Activated CD8-positive, alpha-beta T cell treated with anti-CD3 and anti-CD28 coated beads for 36 hours (primary cell): ENCODE measurements at regions of chrX and their contacts with region 1.

Region 1: GRCh38 chrX:137051978-137052642 is 18.3 kb upstream of the GPR101 start:
- DNase-seq: peak; percentile 83
- ATAC-seq: peak; percentile 95
- H3K4me3 Mint-ChIP-seq: peak overlapping the region; percentile 70
- H3K27ac Mint-ChIP-seq: peak overlapping the region; percentile 69
- H3K4me1 Mint-ChIP-seq: peaks cover 16% of the 10 kb centered on the region
- H3K27me3 Mint-ChIP-seq: peaks cover 18% of the 10 kb centered on the region
- CTCF ChIP-seq: peak; percentile 66

Region 2: DNA sequence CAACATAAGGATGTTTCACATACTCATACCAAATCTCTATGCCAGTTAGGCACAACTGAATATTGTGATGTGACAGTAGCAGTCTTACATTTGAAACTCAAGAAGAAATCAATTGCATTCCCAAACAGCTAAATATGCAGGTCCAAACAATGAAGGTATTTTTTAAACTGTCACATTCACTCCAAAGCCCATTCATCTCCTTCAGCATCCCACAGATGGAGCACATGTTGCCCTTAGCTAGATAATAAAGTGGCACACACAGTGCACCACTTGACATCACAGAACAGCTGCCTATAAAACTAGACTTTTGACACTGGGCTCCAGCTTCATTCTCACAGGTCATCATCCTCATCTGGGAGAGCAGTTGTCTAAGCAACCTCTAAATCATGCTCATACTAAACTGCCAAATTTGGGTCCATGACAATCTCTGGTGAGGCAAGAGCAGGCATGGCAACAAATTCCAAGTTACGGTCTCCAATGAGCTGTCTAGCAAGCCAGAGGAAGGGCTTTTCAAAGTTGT is 245.2 kb before region 1 on chrX:
- CTCF ChIA-PET with region 1: no interaction called
- POLR2A ChIA-PET with region 1: no interaction called
- intact Hi-C with region 1: no loop called
- DNase-seq: no peak
- ATAC-seq: no peak
- H3K4me3 Mint-ChIP-seq: no peak overlapping the region
- H3K27ac Mint-ChIP-seq: no peak overlapping the region
- H3K4me1 Mint-ChIP-seq: peaks cover 5% of the 10 kb centered on the region
- H3K27me3 Mint-ChIP-seq: no peaks in the 10 kb centered on the region
- CTCF ChIP-seq: no peak

Region 3: GRCh38 chrX:136953867-136954787 is 98.0 kb before region 1 on chrX:
- CTCF ChIA-PET with region 1: interaction called, 10 read pairs
- POLR2A ChIA-PET with region 1: no interaction called
- intact Hi-C with region 1: loop called (anchors 2 kb)
- DNase-seq: peak; percentile 81
- ATAC-seq: peak; percentile 74
- H3K4me3 Mint-ChIP-seq: no peak overlapping the region
- H3K27ac Mint-ChIP-seq: no peak overlapping the region
- H3K4me1 Mint-ChIP-seq: no peaks in the 10 kb centered on the region
- H3K27me3 Mint-ChIP-seq: no peaks in the 10 kb centered on the region
- CTCF ChIP-seq: peak; percentile 57

Region 4: GRCh38 chrX:137025930-137026329 is 26.2 kb before region 1 on chrX:
- CTCF ChIA-PET with region 1: interaction called, 10 read pairs
- POLR2A ChIA-PET with region 1: no interaction called
- intact Hi-C with region 1: no loop called
- DNase-seq: no peak
- ATAC-seq: no peak
- H3K4me3 Mint-ChIP-seq: no peak overlapping the region
- H3K27ac Mint-ChIP-seq: no peak overlapping the region
- H3K4me1 Mint-ChIP-seq: no peaks in the 10 kb centered on the region
- H3K27me3 Mint-ChIP-seq: peaks cover 22% of the 10 kb centered on the region
- CTCF ChIP-seq: no peak